Caco-2 (cell line): ENCODE measurements at regions of chr1 and their contacts with region 1.

Region 1: GRCh38 chr1:155057788-155058211 is 5.7 kb upstream of the EFNA4 start:
- DNase-seq: no peak
- H3K4me3 ChIP-seq: no peak overlapping the region
- H3K4me3 Mint-ChIP-seq: no peak overlapping the region
- H3K27ac Mint-ChIP-seq: no peak overlapping the region
- H3K4me1 ChIP-seq: 0 out of 2 replicates have a peak, but pooled peaks cover 10% of the 10 kb centered on the region
- H3K4me1 Mint-ChIP-seq: peaks cover 6% of the 10 kb centered on the region
- H3K27me3 ChIP-seq: no peaks in the 10 kb centered on the region
- H3K27me3 Mint-ChIP-seq: no peaks in the 10 kb centered on the region
- CTCF ChIP-seq: peak in 1 of 2 experiments; percentile 21

Region 2: GRCh38 chr1:155044812-155045690 is 12.7 kb before region 1 on chr1:
- CTCF ChIA-PET with region 1: interaction called, 24 read pairs
- POLR2A ChIA-PET with region 1: no interaction called
- intact Hi-C with region 1: loop called (anchors 1 kb)
- DNase-seq: peak; percentile 79 to 81
- H3K4me3 ChIP-seq: no peak overlapping the region
- H3K4me3 Mint-ChIP-seq: no peak overlapping the region
- H3K27ac Mint-ChIP-seq: no peak overlapping the region
- H3K4me1 ChIP-seq: peaks cover 18% of the 10 kb centered on the region
- H3K4me1 Mint-ChIP-seq: peaks cover 15% of the 10 kb centered on the region
- H3K27me3 ChIP-seq: no peaks in the 10 kb centered on the region
- H3K27me3 Mint-ChIP-seq: no peaks in the 10 kb centered on the region
- CTCF ChIP-seq: peak; percentile 73 to 84